CD14-positive monocyte (primary cell): ENCODE measurements at regions of chr2 and their contacts with region 1.

Region 1: GRCh38 chr2:24827321-24828237 is 34.4 kb downstream of the CENPO start:
- DNase-seq: peak; percentile 57 to 69 (median 67)
- H3K4me3 ChIP-seq: no peak overlapping the region
- H3K4me3 Mint-ChIP-seq: no peak overlapping the region
- H3K27ac ChIP-seq: no peak overlapping the region
- H3K27ac Mint-ChIP-seq: no peak overlapping the region
- H3K4me1 ChIP-seq: no peaks in the 10 kb centered on the region
- H3K4me1 Mint-ChIP-seq: peaks cover 2% of the 10 kb centered on the region
- H3K27me3 ChIP-seq: no peaks in the 10 kb centered on the region
- H3K27me3 Mint-ChIP-seq: no peaks in the 10 kb centered on the region
- CTCF ChIP-seq: peak; percentile 86

Region 2: DNA sequence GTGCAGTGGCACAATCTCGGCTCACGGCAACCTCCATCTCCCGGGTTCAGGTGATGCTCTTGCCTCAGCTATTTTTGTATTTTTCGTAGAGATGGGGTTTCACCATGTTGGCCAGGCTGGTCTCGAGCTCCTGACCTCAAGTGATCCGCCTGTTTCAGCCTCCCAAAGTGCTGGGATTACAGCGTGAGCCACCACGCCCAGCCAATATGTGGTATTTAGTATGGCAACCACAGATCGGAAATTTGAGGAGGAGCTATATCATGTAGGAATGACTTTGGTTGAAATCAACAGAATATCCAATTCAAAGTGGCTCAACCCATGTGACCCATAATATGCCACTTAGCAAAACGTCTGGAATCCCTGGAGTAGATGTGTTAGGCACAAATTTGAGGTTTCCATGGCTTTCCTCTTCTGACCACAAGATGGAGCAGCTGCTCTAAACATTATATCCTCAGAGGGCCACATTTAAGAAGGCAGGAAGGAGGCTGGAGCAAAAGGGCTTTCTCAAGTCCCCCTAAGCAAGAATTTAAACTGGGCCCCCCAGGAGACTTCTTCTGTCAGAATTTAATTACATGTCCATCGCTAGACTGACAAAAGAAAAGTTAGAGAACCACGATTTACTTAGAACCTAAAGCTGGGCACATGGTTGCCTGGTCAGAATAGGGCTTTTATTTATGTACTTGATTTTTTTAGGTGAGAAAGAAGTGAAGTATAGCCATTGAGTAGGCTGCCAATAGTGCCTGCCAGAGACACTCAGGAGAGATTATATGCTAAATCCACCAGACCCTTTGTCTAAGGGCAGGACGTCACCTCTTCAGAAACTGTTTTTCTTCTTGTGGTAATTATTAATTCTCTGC is 417.7 kb before region 1 on chr2:
- intact Hi-C with region 1: loop called (anchors 2 kb)
- DNase-seq: peak; percentile 37 to 58 (median 58)
- H3K4me3 ChIP-seq: no peak overlapping the region
- H3K4me3 Mint-ChIP-seq: no peak overlapping the region
- H3K27ac ChIP-seq: no peak overlapping the region
- H3K27ac Mint-ChIP-seq: no peak overlapping the region
- H3K4me1 ChIP-seq: no peaks in the 10 kb centered on the region
- H3K4me1 Mint-ChIP-seq: no peaks in the 10 kb centered on the region
- H3K27me3 ChIP-seq: peaks cover 0 to 4% of the 10 kb centered on the region in 2 donors
- H3K27me3 Mint-ChIP-seq: peaks cover 0 to 9% (median 0%) of the 10 kb centered on the region in 3 donors
- CTCF ChIP-seq: peak; percentile 80

Region 3: DNA sequence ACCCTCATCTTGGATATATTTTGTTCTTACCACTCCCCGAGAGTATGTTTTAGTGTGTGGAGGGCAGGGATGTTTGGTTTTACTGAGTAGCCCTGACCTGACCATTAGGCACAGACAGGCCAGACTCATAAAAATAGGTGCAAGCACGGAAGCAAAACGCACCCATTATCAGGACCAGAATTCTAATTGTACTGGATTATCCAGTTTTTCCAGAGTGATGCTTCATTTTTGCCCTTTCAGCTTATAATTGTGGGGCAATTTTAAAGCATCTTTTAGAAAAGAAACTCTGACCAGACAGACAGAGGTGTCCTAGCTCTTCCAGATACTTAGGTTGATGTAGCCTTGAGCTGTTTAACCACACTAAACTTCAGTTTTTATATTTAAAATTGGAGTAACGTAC is 332.1 kb before region 1 on chr2:
- intact Hi-C with region 1: no loop called
- DNase-seq: no peak
- H3K4me3 ChIP-seq: no peak overlapping the region
- H3K4me3 Mint-ChIP-seq: no peak overlapping the region
- H3K27ac ChIP-seq: no peak overlapping the region
- H3K27ac Mint-ChIP-seq: peak overlapping the region in 1 of 7 donors; percentile 11
- H3K4me1 ChIP-seq: peaks cover 32 to 34% of the 10 kb centered on the region in 2 donors
- H3K4me1 Mint-ChIP-seq: peaks cover 42% of the 10 kb centered on the region
- H3K27me3 ChIP-seq: no peaks in the 10 kb centered on the region
- H3K27me3 Mint-ChIP-seq: peaks cover 0 to 3% (median 0%) of the 10 kb centered on the region in 3 donors
- CTCF ChIP-seq: no peak

Region 4: GRCh38 chr2:24856791-24857211 is 29.2 kb after region 1 on chr2:
- intact Hi-C with region 1: no loop called
- DNase-seq: no peak
- H3K4me3 ChIP-seq: no peak overlapping the region
- H3K4me3 Mint-ChIP-seq: no peak overlapping the region
- H3K27ac ChIP-seq: no peak overlapping the region
- H3K27ac Mint-ChIP-seq: peak overlapping the region in 1 of 7 donors; percentile 32
- H3K4me1 ChIP-seq: no peaks in the 10 kb centered on the region
- H3K4me1 Mint-ChIP-seq: peaks cover 1% of the 10 kb centered on the region
- H3K27me3 ChIP-seq: no peaks in the 10 kb centered on the region
- H3K27me3 Mint-ChIP-seq: peaks cover 0 to 5% (median 0%) of the 10 kb centered on the region in 3 donors
- CTCF ChIP-seq: no peak